Ascending aorta (tissue), 2 donors: ENCODE measurements at regions of chr21 and their contacts with region 1.

Region 1: DNA sequence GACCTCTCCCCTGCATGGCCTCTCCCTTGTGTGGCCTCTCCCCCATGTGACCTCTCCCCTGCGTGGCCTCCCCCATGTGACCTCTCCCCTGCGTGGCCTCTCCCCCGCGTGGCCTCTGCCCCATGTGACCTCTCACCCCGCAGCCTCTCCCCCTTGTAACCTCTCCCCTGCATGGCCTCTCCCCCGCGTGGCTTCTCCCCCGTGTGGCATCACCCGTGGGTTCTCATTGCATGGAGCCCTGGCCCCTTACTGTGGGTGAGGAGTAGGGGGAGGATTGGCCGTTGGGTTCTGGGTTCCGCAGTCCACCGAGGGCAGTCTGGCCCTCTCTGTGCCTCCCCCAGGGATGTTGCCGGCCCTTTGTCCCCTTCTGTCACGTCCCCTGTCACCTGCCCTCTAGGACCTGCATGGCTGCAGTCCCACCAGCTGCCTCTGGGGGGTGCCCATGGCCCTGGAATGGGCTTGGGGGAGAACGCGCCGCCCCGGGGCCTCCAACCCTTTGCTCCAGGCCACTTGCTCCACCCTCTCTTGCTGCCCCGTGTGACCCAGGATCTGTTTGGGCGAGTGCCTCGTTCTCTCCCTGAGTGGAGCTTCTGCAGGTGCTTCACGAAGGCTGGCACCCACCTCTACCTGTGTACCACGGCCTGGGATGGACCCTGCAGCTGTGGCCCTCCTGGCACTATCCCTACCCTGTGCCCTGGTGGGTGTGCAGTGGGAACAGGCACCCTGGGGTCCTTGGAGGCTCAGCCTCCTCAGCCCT is 21.3 kb downstream of the RRP1 start:
- DNase-seq: peak; percentile 39 to 87
- H3K4me3 ChIP-seq: no peak overlapping the region
- H3K27ac ChIP-seq: no peak overlapping the region
- H3K4me1 ChIP-seq: peaks cover 0 to 6% of the 10 kb centered on the region in 2 donors
- H3K27me3 ChIP-seq: no peaks in the 10 kb centered on the region
- CTCF ChIP-seq: peak; percentile 85 to 93 (median 89)

Region 2: DNA sequence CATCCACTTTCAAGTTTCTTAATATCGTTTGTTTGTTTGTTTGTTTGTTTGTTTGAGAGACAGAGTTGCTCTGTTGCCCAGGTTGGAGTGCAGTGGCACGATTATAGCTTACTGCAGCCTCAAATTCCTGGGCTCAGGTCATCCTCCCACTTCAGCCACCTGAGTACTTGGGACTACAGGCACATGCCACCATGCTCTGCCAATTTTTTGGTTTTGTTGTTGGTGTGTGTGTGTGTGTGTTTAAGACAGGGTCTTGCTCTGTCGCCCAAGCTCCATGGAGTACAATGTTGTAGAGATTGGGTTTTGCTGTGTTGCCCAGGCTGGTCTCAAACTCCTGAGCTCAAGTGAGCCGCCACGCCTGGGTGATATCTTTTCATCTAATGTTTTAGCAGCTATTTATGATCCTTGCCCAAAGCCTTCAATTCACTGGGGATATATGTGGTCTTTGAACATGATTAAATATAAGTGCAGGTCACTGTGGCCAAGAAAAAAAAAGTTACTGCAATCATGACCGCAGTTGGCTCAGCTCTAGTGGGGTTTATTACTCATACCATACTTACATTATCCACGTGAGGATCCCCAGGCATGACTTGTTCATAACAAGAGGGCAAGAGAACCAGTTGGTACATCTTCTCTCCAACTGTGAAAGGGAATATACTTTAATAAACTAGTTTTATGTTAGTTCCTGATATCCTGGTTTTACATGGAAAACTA is 143.3 kb before region 1 on chr21:
- intact Hi-C with region 1: no loop called
- DNase-seq: no peak
- H3K4me3 ChIP-seq: no peak overlapping the region
- H3K27ac ChIP-seq: no peak overlapping the region
- H3K4me1 ChIP-seq: no peaks in the 10 kb centered on the region
- H3K27me3 ChIP-seq: no peaks in the 10 kb centered on the region
- CTCF ChIP-seq: no peak

Region 3: GRCh38 chr21:43728467-43729390 is 82.0 kb before region 1 on chr21:
- intact Hi-C with region 1: no loop called
- DNase-seq: peak; percentile 89 to 98
- H3K4me3 ChIP-seq: peak overlapping the region; percentile 57 to 70
- H3K27ac ChIP-seq: peak overlapping the region; percentile 90 to 91
- H3K4me1 ChIP-seq: peaks cover 27 to 57% of the 10 kb centered on the region in 2 donors
- H3K27me3 ChIP-seq: no peaks in the 10 kb centered on the region
- CTCF ChIP-seq: peak in 2 of 3 experiments; percentile 32 to 48

Region 4: GRCh38 chr21:43864313-43864961 is 53.8 kb after region 1 on chr21:
- intact Hi-C with region 1: no loop called
- DNase-seq: peak in 1 of 2 donors; percentile 69
- H3K4me3 ChIP-seq: peak overlapping the region; percentile 85 to 100
- H3K27ac ChIP-seq: peak overlapping the region; percentile 36 to 56
- H3K4me1 ChIP-seq: peaks cover 0 to 15% of the 10 kb centered on the region in 2 donors
- H3K27me3 ChIP-seq: no peaks in the 10 kb centered on the region
- CTCF ChIP-seq: no peak

Region 5: GRCh38 chr21:43975495-43975993 is 164.9 kb after region 1 on chr21:
- intact Hi-C with region 1: loop called (anchors 1 kb)
- DNase-seq: peak in 1 of 2 donors; percentile 78
- H3K4me3 ChIP-seq: no peak overlapping the region
- H3K27ac ChIP-seq: no peak overlapping the region
- H3K4me1 ChIP-seq: no peaks in the 10 kb centered on the region
- H3K27me3 ChIP-seq: no peaks in the 10 kb centered on the region
- CTCF ChIP-seq: peak; percentile 74 to 90 (median 87)